ENCODE measurements at regions of chr1 and their contacts with region 1.

Region 1: GRCh38 chr1:156221986-156222692 is 9.3 kb downstream of the PMF1 start:
- DNase-seq: no peak
- ATAC-seq: no peak
- H3K4me3 ChIP-seq: no peak overlapping the region
- H3K27ac ChIP-seq: no peak overlapping the region
- H3K4me1 ChIP-seq: peaks cover 22% of the 10 kb centered on the region
- H3K27me3 ChIP-seq: no peaks in the 10 kb centered on the region
- CTCF ChIP-seq: no peak
- POLR2A ChIP-seq: no peak

Region 2: GRCh38 chr1:155929057-155929456 is 293.1 kb before region 1 on chr1:
- intact Hi-C with region 1: no loop called
- DNase-seq: no peak
- ATAC-seq: no peak
- H3K4me3 ChIP-seq: no peak overlapping the region
- H3K27ac ChIP-seq: no peak overlapping the region
- H3K4me1 ChIP-seq: peaks cover 38% of the 10 kb centered on the region
- H3K27me3 ChIP-seq: no peaks in the 10 kb centered on the region
- CTCF ChIP-seq: no peak
- POLR2A ChIP-seq: no peak

Region 3: DNA sequence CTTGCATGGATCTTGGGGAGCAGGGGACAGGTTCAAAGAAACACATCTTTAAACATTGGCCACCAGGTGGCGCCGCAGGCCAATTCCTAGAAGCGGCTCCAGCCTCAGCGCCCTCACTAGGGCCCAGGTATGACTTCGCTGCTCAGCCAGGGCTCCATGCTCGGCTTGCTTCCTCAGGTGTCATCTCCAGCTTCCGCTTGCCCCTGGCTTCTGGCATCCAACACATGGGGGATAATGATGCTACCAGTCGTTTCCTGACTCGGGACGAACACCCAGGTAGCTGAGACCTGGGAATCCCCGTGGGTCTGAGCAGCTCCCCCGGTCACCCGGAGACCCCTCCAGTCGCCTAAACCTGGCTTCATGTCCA is 131.3 kb before region 1 on chr1:
- intact Hi-C with region 1: loop called (anchors 5 kb)
- DNase-seq: peak; percentile 88 to 94 (median 92)
- ATAC-seq: peak; percentile 88
- H3K4me3 ChIP-seq: no peak overlapping the region
- H3K27ac ChIP-seq: no peak overlapping the region
- H3K4me1 ChIP-seq: peaks cover 10% of the 10 kb centered on the region
- H3K27me3 ChIP-seq: no peaks in the 10 kb centered on the region
- CTCF ChIP-seq: peak; percentile 71 to 89 (median 87)
- POLR2A ChIP-seq: no peak

Region 4: DNA sequence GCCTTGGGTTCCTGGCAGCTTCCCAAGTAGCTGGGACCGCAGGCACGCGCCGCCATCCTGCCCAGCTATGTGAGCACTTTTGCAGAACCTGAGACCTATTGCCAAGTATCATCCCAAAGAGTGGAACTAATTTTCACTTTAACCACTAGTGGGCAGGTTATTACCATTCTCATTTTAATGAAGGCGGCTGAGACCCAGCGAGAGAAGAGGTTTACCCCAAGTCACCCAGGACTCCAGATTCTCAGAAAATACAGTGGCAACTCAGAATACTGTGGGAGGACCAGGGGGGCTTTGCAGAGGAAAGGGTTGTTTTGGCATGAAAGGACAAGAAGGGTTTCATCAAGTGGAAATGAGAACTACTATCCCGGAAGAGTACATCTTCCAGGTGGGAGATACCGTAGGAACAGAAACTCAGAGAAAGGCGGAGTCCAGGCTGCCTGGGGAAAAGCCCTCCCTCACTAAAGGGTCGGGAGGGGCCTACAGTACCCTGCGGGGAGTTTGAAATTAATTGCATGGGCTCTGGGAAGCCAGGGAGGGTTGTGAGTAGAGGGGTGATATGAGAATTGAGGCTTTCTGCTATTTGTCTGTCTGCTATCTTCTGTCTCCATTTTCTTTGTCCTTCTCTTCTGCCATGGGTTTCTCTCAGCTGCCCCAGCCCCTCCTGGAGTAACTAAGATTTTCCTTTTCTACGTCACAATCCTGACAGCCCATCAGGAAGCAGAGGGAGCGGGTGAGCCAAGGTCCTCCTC is 75.9 kb before region 1 on chr1:
- intact Hi-C with region 1: loop called (anchors 5 kb)
- DNase-seq: peak; percentile 64 to 80 (median 76)
- ATAC-seq: peak; percentile 74
- H3K4me3 ChIP-seq: no peak overlapping the region
- H3K27ac ChIP-seq: no peak overlapping the region
- H3K4me1 ChIP-seq: no peaks in the 10 kb centered on the region
- H3K27me3 ChIP-seq: no peaks in the 10 kb centered on the region
- CTCF ChIP-seq: peak; percentile 42 to 85 (median 69)
- POLR2A ChIP-seq: no peak